ENCODE measurements at regions of chr7 and their contacts with region 1.

Region 1: GRCh38 chr7:38335492-38336147 is 62.2 kb upstream of the TARP start:
- DNase-seq: peak; percentile 67
- ATAC-seq: peak; percentile 99
- H3K4me3 Mint-ChIP-seq: peak overlapping the region; percentile 28
- H3K27ac Mint-ChIP-seq: peak overlapping the region; percentile 30
- H3K4me1 Mint-ChIP-seq: peaks cover 15% of the 10 kb centered on the region
- H3K27me3 Mint-ChIP-seq: no peaks in the 10 kb centered on the region
- CTCF ChIP-seq: peak; percentile 45

Region 2: DNA sequence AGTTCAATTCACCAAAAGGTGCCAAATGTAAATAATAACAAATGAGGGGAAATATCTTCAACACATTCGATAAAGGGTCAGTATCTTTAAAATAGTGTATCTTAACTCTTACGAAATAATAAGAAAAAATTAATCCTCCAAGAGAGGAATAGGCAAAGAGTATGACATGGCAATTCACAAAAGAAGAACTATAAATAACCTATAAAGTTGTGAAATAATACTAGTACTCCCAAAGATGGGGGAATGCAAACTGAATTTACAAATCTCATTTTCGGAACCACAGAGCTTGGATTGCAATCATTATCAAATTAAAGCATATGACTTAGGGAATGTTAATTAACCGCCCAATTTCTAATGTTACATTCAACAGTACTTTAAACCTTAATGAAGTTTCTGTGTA is 16.0 kb after region 1 on chr7:
- CTCF ChIA-PET with region 1: interaction called, 19 read pairs
- POLR2A ChIA-PET with region 1: no interaction called
- intact Hi-C with region 1: loop called (anchors 2 kb)
- DNase-seq: no peak
- ATAC-seq: no peak
- H3K4me3 Mint-ChIP-seq: no peak overlapping the region
- H3K27ac Mint-ChIP-seq: no peak overlapping the region
- H3K4me1 Mint-ChIP-seq: peaks cover 36% of the 10 kb centered on the region
- H3K27me3 Mint-ChIP-seq: no peaks in the 10 kb centered on the region
- CTCF ChIP-seq: no peak

Measured in activated B cell treated with CpG ODN at 0.5 μM for 24 hours (primary cell).